CD8-positive, alpha-beta T cell (primary cell): ENCODE measurements at regions of chr21 and their contacts with region 1.

Region 1: GRCh38 chr21:33924079-33924765 is 8.6 kb upstream of the ATP5PO start:
- DNase-seq: peak; percentile 78 to 97 (median 90)
- ATAC-seq: peak; percentile 95
- H3K4me3 ChIP-seq: no peak overlapping the region
- H3K4me3 Mint-ChIP-seq: peak overlapping the region; percentile 5
- H3K27ac ChIP-seq: no peak overlapping the region
- H3K27ac Mint-ChIP-seq: peak overlapping the region; percentile 77
- H3K4me1 ChIP-seq: peaks cover 11% of the 10 kb centered on the region
- H3K4me1 Mint-ChIP-seq: peaks cover 11% of the 10 kb centered on the region
- H3K27me3 ChIP-seq: no peaks in the 10 kb centered on the region
- H3K27me3 Mint-ChIP-seq: no peaks in the 10 kb centered on the region
- CTCF ChIP-seq: peak; percentile 79

Region 2: GRCh38 chr21:33976082-33977016 is 52.1 kb after region 1 on chr21:
- CTCF ChIA-PET with region 1: interaction called, 18 read pairs
- POLR2A ChIA-PET with region 1: interaction called, 3 read pairs
- intact Hi-C with region 1: loop called in 1 of 2 experiments (anchors 5 kb)
- DNase-seq: peak; percentile 14 to 79 (median 61)
- ATAC-seq: peak; percentile 61
- H3K4me3 ChIP-seq: no peak overlapping the region
- H3K4me3 Mint-ChIP-seq: peak overlapping the region; percentile 66
- H3K27ac ChIP-seq: peak overlapping the region; percentile 47 to 80
- H3K27ac Mint-ChIP-seq: peak overlapping the region; percentile 92
- H3K4me1 ChIP-seq: peaks cover 29% of the 10 kb centered on the region
- H3K4me1 Mint-ChIP-seq: peaks cover 48% of the 10 kb centered on the region
- H3K27me3 ChIP-seq: no peaks in the 10 kb centered on the region
- H3K27me3 Mint-ChIP-seq: no peaks in the 10 kb centered on the region
- CTCF ChIP-seq: no peak

Region 3: DNA sequence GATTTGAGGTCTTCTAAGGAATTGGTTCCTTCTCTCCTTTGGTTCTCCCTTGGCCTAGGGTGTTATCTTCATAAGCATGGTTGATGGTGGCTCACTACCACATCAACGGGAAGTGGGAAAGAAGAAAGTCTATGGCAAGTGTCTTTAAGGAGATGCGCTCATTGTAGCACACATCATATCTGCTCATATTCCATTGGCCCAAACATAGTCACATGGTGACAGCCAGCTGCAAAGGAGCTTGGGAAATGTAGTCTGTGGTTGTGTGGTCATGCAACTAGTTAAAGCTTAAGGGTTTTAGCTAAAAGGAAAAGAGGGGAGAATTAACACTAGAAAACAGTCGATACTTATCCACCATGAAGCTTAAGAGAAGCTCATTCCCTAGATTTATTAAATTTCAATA is 137.8 kb after region 1 on chr21:
- CTCF ChIA-PET with region 1: interaction called, 11 read pairs
- POLR2A ChIA-PET with region 1: no interaction called
- intact Hi-C with region 1: no loop called
- DNase-seq: peak in 1 of 9 experiments; percentile 19
- ATAC-seq: no peak
- H3K4me3 ChIP-seq: no peak overlapping the region
- H3K4me3 Mint-ChIP-seq: no peak overlapping the region
- H3K27ac ChIP-seq: no peak overlapping the region
- H3K27ac Mint-ChIP-seq: no peak overlapping the region
- H3K4me1 ChIP-seq: no peaks in the 10 kb centered on the region
- H3K4me1 Mint-ChIP-seq: no peaks in the 10 kb centered on the region
- H3K27me3 ChIP-seq: no peaks in the 10 kb centered on the region
- H3K27me3 Mint-ChIP-seq: no peaks in the 10 kb centered on the region
- CTCF ChIP-seq: no peak

Region 4: DNA sequence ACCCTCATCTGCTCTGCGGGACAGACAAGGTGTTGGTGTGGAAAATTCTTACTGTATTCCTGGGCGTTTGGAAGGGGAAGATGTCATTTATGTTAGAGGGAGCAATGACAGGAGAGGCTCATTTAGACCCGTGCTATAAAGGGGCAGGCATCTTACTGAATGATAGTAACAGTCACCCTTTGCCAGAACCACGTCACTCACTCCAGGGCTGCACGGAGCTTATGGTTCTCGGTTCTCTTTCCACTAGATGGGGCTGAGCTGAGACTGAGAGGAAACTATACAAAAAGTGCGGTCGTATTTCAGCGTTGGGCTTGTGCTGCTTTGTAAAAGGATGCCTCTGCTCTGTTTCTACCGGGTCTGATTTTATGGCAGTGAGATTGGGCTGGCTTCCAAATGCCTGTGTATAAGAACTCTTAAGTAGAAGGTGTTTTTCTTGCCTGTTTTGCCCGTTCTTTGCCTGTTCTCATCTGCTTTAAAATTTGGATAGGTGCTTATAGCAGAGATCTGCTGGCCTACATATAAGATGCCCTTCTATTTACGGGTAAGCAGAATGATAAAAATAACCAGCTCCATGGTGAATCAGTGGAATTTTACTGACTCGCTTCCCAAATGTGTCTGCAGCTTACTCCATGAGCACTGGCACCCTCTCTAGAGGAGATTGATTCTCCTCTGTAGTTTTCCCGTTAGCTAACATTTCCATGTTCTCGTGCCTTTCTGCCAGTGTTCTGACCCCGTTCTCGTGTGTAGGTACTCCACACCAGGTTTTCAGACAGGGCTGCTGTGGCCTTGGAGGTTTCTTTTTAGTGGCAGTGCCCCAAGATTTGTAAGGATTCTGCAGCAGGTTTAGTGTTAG is 205.0 kb after region 1 on chr21:
- CTCF ChIA-PET with region 1: interaction called, 43 read pairs
- POLR2A ChIA-PET with region 1: interaction called, 9 read pairs
- intact Hi-C with region 1: loop called (anchors 2 kb)
- DNase-seq: peak; percentile 17 to 84 (median 64)
- ATAC-seq: peak; percentile 92
- H3K4me3 ChIP-seq: peak overlapping the region in 1 of 2 experiments; percentile 25
- H3K4me3 Mint-ChIP-seq: peak overlapping the region; percentile 58
- H3K27ac ChIP-seq: peak overlapping the region; percentile 28 to 48
- H3K27ac Mint-ChIP-seq: peak overlapping the region; percentile 88
- H3K4me1 ChIP-seq: peaks cover 69% of the 10 kb centered on the region
- H3K4me1 Mint-ChIP-seq: peaks cover 93% of the 10 kb centered on the region
- H3K27me3 ChIP-seq: no peaks in the 10 kb centered on the region
- H3K27me3 Mint-ChIP-seq: no peaks in the 10 kb centered on the region
- CTCF ChIP-seq: peak; percentile 47

Region 5: GRCh38 chr21:34336756-34337391 is 412.7 kb after region 1 on chr21:
- CTCF ChIA-PET with region 1: interaction called, 256 read pairs
- POLR2A ChIA-PET with region 1: no interaction called
- intact Hi-C with region 1: no loop called
- DNase-seq: no peak
- ATAC-seq: no peak
- H3K4me3 ChIP-seq: no peak overlapping the region
- H3K4me3 Mint-ChIP-seq: no peak overlapping the region
- H3K27ac ChIP-seq: no peak overlapping the region
- H3K27ac Mint-ChIP-seq: no peak overlapping the region
- H3K4me1 ChIP-seq: no peaks in the 10 kb centered on the region
- H3K4me1 Mint-ChIP-seq: no peaks in the 10 kb centered on the region
- H3K27me3 ChIP-seq: peaks cover 0 to 3% of the 10 kb centered on the region in 2 experiments
- H3K27me3 Mint-ChIP-seq: no peaks in the 10 kb centered on the region
- CTCF ChIP-seq: no peak

Region 6: DNA sequence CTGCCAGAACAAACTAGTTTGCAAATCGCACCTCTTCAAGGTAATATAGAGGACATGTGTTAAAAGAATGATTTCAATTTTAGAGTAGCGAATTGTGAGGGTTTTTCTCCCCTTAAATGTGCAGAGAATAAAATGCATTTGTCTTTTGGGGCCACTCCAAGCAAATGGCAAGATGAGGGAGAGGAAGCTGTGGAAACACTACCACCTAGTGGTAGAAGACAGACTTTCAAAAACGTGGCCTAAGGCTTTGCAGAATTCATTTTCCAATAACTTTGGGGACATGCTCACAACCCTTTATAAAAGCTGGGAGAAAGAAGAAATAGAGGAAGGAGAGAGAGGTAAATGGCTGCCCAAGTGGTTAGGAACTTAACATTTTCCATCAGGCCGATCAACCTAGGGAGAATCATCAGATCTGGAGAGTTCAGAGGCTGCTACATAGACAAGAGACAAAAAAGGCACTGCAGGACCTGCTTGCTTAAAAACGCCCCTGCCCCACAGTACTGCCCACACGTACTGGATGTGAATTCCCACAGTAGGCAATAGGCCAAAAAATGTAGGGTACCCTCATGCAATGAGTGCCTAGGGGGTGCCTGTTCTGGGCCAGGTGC is 706.4 kb after region 1 on chr21:
- CTCF ChIA-PET with region 1: interaction called, 6 read pairs
- POLR2A ChIA-PET with region 1: no interaction called
- intact Hi-C with region 1: loop called (anchors 5 kb)
- DNase-seq: peak in 3 of 9 experiments; percentile 16 to 75 (median 68)
- ATAC-seq: peak; percentile 72
- H3K4me3 ChIP-seq: no peak overlapping the region
- H3K4me3 Mint-ChIP-seq: no peak overlapping the region
- H3K27ac ChIP-seq: no peak overlapping the region
- H3K27ac Mint-ChIP-seq: no peak overlapping the region
- H3K4me1 ChIP-seq: no peaks in the 10 kb centered on the region
- H3K4me1 Mint-ChIP-seq: no peaks in the 10 kb centered on the region
- H3K27me3 ChIP-seq: no peaks in the 10 kb centered on the region
- H3K27me3 Mint-ChIP-seq: peaks cover 16% of the 10 kb centered on the region
- CTCF ChIP-seq: peak; percentile 84